Left colon (tissue), 2 donors: ENCODE measurements at regions of chr6 and their contacts with region 1.

Region 1: GRCh38 chr6:97394160-97394748 is 111.2 kb upstream of the MMS22L start:
- DNase-seq: peak in 1 of 2 donors; percentile 30
- ATAC-seq: peak; percentile 92

Region 2: DNA sequence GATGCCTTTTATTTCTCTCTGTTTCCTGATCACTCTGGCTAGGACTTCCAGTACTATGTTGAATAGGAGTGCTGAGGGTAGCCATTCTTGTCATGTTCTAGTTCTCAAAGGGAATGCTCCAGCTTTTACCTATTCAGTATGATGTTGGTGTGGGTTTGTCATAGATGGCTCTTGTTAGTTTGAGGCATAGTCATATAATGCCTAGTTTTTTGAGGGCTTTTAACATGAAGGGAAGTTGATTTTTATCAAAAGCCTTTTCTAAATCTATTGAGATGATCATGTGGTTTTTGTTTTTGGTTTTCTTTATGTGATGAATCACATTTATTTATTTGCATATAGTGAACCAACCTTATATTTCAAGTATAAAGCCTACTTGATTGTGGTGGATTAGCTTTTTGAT is 414.1 kb before region 1 on chr6:
- intact Hi-C with region 1: no loop called
- DNase-seq: no peak
- ATAC-seq: no peak

Region 3: GRCh38 chr6:97068211-97068610 is 326.0 kb before region 1 on chr6:
- intact Hi-C with region 1: loop called in 1 of 2 experiments (anchors 10 kb)
- DNase-seq: no peak
- ATAC-seq: no peak

Region 4: GRCh38 chr6:97129106-97129505 is 265.1 kb before region 1 on chr6:
- intact Hi-C with region 1: no loop called
- DNase-seq: no peak
- ATAC-seq: no peak

Region 5: GRCh38 chr6:97186416-97186999 is 207.7 kb before region 1 on chr6:
- intact Hi-C with region 1: loop called (anchors 5 to 10 kb)
- DNase-seq: peak; percentile 37 to 82
- ATAC-seq: peak; percentile 88